ENCODE measurements at regions of chr7 and their contacts with region 1.

Region 1: DNA sequence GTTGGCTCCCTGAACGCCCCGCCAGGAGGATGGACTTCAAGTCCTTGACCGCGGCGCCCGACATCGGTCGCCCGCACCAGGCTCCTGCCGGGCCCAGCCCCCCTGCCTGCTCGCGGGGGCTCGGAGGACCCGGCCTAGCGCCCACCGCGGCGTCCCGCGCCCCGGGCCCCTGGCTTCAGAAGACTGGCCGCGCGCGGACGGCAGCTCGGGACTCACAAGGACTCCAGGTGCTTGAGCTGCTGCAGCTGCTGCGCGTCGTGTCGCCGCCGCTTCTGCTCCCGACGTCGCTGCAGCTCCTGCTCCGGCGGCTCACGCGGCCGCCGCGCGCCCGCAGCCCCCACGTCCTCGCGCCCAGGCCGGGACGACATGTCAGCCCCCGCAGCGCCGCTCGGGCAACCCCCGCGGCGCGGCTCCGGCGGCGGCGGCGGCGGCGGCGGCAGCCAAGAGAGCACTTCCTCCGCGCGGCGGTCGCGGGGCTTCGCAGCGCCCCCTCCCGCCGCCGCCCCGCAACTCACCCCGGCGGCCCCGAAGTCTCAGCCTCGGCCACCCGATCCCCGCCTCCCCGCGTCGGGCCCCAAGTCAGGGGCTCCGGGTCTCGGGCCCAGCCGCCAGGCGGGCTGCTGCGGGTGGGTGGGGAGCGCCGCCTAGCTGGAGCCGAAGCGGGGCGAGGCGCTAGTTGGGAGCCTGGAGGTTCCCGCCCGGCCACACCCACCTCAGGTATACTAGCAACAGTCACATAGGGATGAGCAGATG is at the start of gene RP9:
- DNase-seq: peak; percentile 52 to 93 (median 68)
- ATAC-seq: peak; percentile 88
- H3K4me3 ChIP-seq: peak within 1 kb of the TSS; percentile 78
- H3K4me3 Mint-ChIP-seq: peak within 1 kb of the TSS; percentile 90
- H3K27ac ChIP-seq: peak within 1 kb of the TSS in 1 of 2 donors; percentile 51
- H3K27ac Mint-ChIP-seq: peak within 1 kb of the TSS; percentile 68
- H3K4me1 ChIP-seq: peaks cover 34% of the 10 kb centered on the region
- H3K4me1 Mint-ChIP-seq: peaks cover 48% of the 10 kb centered on the region
- H3K27me3 ChIP-seq: peaks cover 2 to 3% of the 10 kb centered on the region in 2 experiments
- H3K27me3 Mint-ChIP-seq: peaks cover 19% of the 10 kb centered on the region
- CTCF ChIP-seq: peak; percentile 49
- total RNA-seq, gene RP9: 17.6 to 20.3 TPM

Region 2: GRCh38 chr7:32490127-32490822 is 618.9 kb before region 1 on chr7 and contains the start of gene LSM5:
- CTCF ChIA-PET with region 1: interaction called, 6 read pairs
- POLR2A ChIA-PET with region 1: no interaction called
- intact Hi-C with region 1: loop called (anchors 5 kb)
- DNase-seq: peak; percentile 80 to 96 (median 85)
- ATAC-seq: peak; percentile 67
- H3K4me3 ChIP-seq: peak within 1 kb of the TSS; percentile 68
- H3K4me3 Mint-ChIP-seq: peak within 1 kb of the TSS; percentile 92
- H3K27ac ChIP-seq: peak within 1 kb of the TSS; percentile 83 to 84
- H3K27ac Mint-ChIP-seq: peak within 1 kb of the TSS; percentile 92
- H3K4me1 ChIP-seq: peaks cover 16% of the 10 kb centered on the region
- H3K4me1 Mint-ChIP-seq: peaks cover 42% of the 10 kb centered on the region
- H3K27me3 ChIP-seq: no peaks in the 10 kb centered on the region
- H3K27me3 Mint-ChIP-seq: no peaks in the 10 kb centered on the region
- CTCF ChIP-seq: no peak
- total RNA-seq, gene LSM5: 28.2 to 28.7 TPM

Region 3: DNA sequence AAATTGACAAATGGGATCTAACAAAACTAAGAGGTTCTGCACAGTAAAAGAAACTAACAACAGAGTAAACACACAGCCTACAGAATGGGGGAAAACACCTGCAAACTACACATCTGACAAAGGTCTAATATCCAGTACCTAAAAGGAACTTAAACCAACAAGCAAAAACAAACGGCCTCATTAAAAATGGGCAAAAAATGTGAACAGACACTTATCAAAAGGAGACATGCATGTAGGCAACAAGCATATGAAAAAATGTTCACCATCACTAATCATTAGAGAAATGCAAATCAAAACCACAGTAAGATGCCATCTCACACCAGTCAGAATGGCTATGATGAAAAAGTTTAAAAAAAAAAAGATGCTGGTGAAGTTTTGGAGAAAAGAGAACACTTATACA is 415.0 kb before region 1 on chr7:
- CTCF ChIA-PET with region 1: no interaction called
- POLR2A ChIA-PET with region 1: no interaction called
- intact Hi-C with region 1: loop called (anchors 2 to 5 kb)
- DNase-seq: no peak
- ATAC-seq: no peak
- H3K4me3 ChIP-seq: no peak overlapping the region
- H3K4me3 Mint-ChIP-seq: no peak overlapping the region
- H3K27ac ChIP-seq: no peak overlapping the region
- H3K27ac Mint-ChIP-seq: no peak overlapping the region
- H3K4me1 ChIP-seq: peaks cover 3% of the 10 kb centered on the region
- H3K4me1 Mint-ChIP-seq: peaks cover 10% of the 10 kb centered on the region
- H3K27me3 ChIP-seq: no peaks in the 10 kb centered on the region
- H3K27me3 Mint-ChIP-seq: peaks cover 11% of the 10 kb centered on the region
- CTCF ChIP-seq: no peak

Region 4: DNA sequence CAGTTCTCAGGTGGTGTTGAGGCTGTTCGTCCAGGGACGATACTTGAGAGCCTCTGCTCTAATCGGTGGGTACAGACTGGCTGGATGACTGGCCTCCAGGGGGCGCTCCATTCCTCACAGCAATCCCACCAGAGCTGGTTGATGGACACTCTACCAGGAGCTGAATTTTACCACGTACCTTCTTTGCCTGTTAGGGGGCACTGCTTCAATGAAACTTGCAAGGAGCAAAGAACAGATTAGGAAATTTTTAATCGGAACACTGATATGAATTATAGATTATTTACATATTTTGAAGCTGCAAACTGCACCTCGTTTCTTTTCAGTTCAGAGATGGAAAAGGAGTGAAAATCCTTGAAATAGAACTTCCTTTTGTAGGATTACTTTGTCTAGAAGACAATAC is 262.5 kb before region 1 on chr7:
- CTCF ChIA-PET with region 1: interaction called, 4 read pairs
- POLR2A ChIA-PET with region 1: interaction called, 6 read pairs
- intact Hi-C with region 1: loop called (anchors 1 to 2 kb)
- DNase-seq: peak; percentile 84 to 97 (median 91)
- ATAC-seq: peak; percentile 100
- H3K4me3 ChIP-seq: no peak overlapping the region
- H3K4me3 Mint-ChIP-seq: no peak overlapping the region
- H3K27ac ChIP-seq: no peak overlapping the region
- H3K27ac Mint-ChIP-seq: no peak overlapping the region
- H3K4me1 ChIP-seq: peaks cover 5% of the 10 kb centered on the region
- H3K4me1 Mint-ChIP-seq: peaks cover 6% of the 10 kb centered on the region
- H3K27me3 ChIP-seq: peaks cover 3 to 4% of the 10 kb centered on the region in 2 experiments
- H3K27me3 Mint-ChIP-seq: peaks cover 28% of the 10 kb centered on the region
- CTCF ChIP-seq: peak; percentile 90

Region 5: DNA sequence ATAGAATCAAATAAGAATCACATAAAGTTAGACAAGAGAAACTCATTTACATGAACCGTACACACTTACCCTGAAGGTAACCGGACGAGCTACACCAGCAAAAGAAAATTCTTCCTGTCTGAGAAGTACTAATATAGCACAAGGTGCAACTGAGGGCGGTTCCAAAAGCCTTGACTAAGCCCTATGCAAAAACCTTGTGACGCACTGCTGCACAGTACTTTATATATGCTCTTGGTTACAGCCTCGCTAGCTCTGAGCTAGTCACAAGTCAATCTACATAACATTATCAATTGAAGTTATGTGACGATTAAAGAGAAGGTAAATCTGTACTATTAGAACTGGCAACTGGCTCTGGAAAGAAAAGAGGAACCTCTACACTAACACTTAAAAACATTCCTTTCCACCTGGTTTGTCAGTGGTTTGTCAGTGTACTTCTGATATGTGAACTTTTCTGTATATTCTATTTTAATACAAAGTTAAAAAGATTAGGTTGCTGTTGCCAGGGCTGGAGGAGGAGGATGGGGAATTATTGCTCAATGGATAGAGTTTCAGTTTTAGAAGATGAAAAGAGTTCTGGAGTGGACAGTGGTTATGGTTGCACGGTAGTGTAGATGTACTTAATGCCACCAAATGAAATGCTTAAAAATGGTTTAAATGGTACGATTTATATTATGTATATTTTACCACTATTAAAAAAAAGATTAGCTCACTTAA is 68.2 kb before region 1 on chr7:
- CTCF ChIA-PET with region 1: interaction called, 8 read pairs
- POLR2A ChIA-PET with region 1: interaction called, 4 read pairs
- intact Hi-C with region 1: loop called in 1 of 2 experiments (anchors 2 kb)
- DNase-seq: peak; percentile 44 to 90 (median 58)
- ATAC-seq: peak; percentile 99
- H3K4me3 ChIP-seq: peak overlapping the region; percentile 45
- H3K4me3 Mint-ChIP-seq: peak overlapping the region; percentile 89
- H3K27ac ChIP-seq: peak overlapping the region; percentile 56 to 75
- H3K27ac Mint-ChIP-seq: peak overlapping the region; percentile 98
- H3K4me1 ChIP-seq: peaks cover 5% of the 10 kb centered on the region
- H3K4me1 Mint-ChIP-seq: peaks cover 70% of the 10 kb centered on the region
- H3K27me3 ChIP-seq: no peaks in the 10 kb centered on the region
- H3K27me3 Mint-ChIP-seq: no peaks in the 10 kb centered on the region
- CTCF ChIP-seq: no peak

Region 6: DNA sequence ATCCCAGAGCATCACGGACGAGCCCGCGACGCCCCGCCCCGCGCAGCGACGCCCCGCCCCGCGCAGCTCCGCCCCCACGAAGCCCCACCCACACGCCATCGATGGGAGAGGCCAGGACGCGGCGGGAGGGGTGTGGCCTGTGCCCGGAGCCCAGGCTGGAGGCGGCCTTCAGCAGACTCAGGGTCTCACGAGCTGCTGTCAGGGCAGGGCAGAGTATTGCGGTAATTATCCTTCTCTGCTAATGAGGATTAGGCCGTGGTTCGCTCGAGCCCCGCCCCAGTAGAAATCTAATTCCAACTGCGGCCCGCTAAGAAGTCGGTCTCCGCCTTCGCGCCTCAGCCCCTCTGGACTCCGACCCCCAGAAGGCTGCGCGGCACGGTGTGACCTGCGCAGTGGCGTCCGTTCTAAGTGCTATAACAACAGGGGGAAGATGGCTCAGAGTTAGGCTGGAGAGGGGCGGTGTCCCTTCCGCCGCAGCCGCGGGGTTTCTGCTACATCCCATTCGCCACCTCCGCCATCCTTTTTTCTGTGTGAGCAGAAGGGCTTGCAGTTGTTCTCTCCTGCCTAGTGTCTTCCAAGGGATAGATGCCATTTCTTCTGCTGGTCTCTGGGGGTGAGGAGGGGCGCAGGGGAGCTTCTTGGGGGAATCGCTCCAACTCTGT is 46.3 kb before region 1 on chr7:
- CTCF ChIA-PET with region 1: interaction called, 23 read pairs
- POLR2A ChIA-PET with region 1: interaction called, 28 read pairs
- intact Hi-C with region 1: loop called (anchors 1 to 2 kb)
- DNase-seq: peak; percentile 83 to 98 (median 90)
- ATAC-seq: peak; percentile 90
- H3K4me3 ChIP-seq: peak overlapping the region; percentile 72
- H3K4me3 Mint-ChIP-seq: peak overlapping the region; percentile 98
- H3K27ac ChIP-seq: peak overlapping the region; percentile 75 to 89
- H3K27ac Mint-ChIP-seq: peak overlapping the region; percentile 95
- H3K4me1 ChIP-seq: peaks cover 25% of the 10 kb centered on the region
- H3K4me1 Mint-ChIP-seq: peaks cover 48% of the 10 kb centered on the region
- H3K27me3 ChIP-seq: no peaks in the 10 kb centered on the region
- H3K27me3 Mint-ChIP-seq: no peaks in the 10 kb centered on the region
- CTCF ChIP-seq: no peak